ENCODE measurements at regions of chr1 and their contacts with region 1.

Region 1: DNA sequence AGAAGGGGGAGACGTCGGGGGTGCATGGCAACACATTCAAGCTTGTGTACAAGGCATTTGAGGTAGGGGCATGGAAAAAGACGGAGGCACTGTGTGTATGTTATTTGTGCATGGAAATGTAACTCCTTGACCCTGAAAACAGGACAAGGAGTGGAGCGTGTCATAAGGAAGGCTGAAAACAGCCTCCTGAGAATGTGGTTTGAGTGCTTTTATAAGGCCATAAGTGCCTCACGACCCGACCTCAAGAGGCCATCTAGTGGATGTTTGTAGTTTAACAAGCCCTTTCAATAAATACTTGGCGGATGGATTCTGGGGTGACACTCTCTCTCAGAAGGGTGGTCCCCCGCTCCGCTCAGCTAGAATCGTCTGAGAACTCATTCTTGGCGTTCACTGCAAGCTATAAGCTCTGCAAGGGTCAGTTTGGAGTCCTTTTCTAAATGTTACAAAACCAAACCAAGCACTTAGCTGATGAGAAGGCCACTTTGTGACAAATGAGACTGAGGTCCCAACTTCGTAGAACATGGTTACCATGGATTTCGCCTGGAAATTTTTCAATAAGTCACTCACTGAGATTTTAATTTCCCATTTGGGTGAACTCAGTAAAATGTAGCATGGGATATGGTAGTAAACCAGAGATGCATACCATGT is 38.8 kb upstream of the CLCA4 start:
- DNase-seq: peak in 5 of 7 donors; percentile 15 to 59 (median 30)
- H3K4me3 ChIP-seq: no peak overlapping the region
- H3K27ac ChIP-seq: no peak overlapping the region
- H3K4me1 ChIP-seq: peaks cover 0 to 2% of the 10 kb centered on the region in 2 donors
- H3K27me3 ChIP-seq: no peaks in the 10 kb centered on the region
- CTCF ChIP-seq: peak; percentile 33 to 63 (median 57)
- POLR2A ChIP-seq: no peak

Region 2: DNA sequence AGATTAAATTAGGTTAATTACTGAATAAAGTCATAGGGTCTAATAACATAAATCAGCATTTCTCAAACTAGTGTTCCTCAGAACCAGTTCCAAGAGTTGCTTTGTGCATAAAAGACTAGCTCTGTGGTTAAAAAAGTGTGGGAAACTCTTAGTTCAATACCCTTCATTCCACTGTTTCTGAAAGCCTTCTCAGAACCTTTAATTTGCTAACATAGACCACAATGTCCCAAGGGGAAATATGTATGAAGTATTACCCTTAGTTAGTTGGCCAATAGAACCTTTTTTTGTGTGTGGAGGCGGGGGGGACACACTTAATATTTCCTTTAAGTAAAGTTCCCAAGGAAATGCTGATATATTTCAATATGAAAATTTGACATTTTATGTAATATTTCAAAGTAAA is 132.4 kb before region 1 on chr1:
- intact Hi-C with region 1: loop called (anchors 5 to 10 kb)
- DNase-seq: no peak
- H3K4me3 ChIP-seq: no peak overlapping the region
- H3K27ac ChIP-seq: no peak overlapping the region
- H3K4me1 ChIP-seq: peaks cover 0 to 7% of the 10 kb centered on the region in 2 donors
- H3K27me3 ChIP-seq: no peaks in the 10 kb centered on the region
- CTCF ChIP-seq: no peak
- POLR2A ChIP-seq: no peak